Astrocyte of the cerebellum (primary cell): ENCODE measurements at regions of chr1 and their contacts with region 1.

Region 1: GRCh38 chr1:235971571-235972310 is 93.1 kb downstream of the NID1 start:
- DNase-seq: peak; percentile 88
- H3K4me3 ChIP-seq: peak overlapping the region; percentile 18
- CTCF ChIP-seq: peak; percentile 84

Region 2: DNA sequence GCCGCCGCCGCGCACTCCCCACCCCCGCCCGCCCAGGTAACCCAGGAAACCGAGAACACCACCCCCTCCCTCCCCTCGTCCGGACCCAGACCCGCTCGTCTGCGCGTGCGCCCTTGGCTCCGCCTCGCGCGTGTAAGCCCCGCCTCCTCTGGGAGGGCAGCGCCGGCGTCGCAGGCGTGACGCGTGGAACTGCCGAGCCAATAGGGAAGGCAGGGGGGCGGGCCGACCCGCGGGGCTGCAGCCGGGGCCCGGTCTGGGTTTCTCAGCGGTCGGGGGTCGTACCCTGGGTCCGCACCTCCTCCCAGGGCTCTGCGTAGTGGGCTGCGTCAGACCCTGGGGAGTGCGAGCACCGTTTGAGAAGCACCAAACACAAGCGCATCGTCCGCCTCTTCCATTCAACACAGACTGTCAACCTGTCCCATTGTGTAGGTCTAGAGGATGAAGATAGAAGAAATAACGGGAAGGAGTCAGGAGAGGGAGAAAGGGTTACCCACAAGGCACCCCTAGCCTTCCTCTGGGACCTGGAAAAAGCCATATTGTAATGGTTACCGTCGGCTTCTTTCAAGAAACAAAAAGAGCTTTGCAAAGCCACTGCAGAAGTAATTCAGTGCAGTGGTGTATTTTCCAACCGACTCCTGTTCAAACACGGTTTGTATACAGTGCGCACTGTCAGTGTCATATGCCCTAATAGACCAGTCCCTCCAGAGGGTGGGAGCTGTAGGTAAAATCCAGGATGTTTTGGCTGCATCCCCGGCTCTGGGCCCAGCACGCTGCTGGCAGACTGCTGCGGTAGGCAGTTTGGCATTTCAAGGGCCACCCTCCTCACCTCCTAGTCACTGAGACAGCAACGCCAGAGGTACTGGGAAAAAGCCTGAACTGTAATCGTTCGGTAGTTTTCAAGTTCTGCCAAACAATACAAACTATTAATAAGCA is 104.6 kb before region 1 on chr1:
- in situ Hi-C with region 1: loop called (anchors 5 kb)
- DNase-seq: peak; percentile 81
- H3K4me3 ChIP-seq: peak overlapping the region; percentile 82
- CTCF ChIP-seq: no peak

Region 3: GRCh38 chr1:235917267-235917811 is 54.4 kb before region 1 on chr1:
- in situ Hi-C with region 1: no loop called
- DNase-seq: peak; percentile 92
- H3K4me3 ChIP-seq: no peak overlapping the region
- CTCF ChIP-seq: no peak